Activated CD8-positive, alpha-beta T cell treated with anti-CD3 and anti-CD28 coated beads for 36 hours (primary cell): ENCODE measurements at regions of chr11 and their contacts with region 1.

Region 1: DNA sequence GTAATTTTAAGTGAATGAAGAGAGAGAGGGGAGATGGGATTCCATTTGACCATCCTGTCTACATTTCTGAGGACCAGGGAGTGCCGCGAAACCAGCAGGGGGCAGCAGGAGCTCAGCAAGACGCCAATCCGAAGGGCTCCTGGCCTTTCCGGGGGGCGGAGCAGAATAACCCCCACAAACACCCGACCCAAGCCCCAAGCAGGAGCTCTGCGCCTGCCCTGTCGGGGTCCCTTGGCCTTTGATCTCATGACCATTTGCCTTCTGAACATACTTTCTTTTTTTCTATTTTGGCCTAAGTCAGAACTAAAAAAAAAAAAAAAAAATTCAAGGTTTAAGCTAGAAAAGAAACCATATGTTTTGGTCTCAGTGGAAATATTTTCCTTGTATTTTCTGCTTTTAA is 21.9 kb upstream of the SCN2B start:
- DNase-seq: peak; percentile 93
- ATAC-seq: peak; percentile 14
- H3K4me3 Mint-ChIP-seq: no peak overlapping the region
- H3K27ac Mint-ChIP-seq: no peak overlapping the region
- H3K4me1 Mint-ChIP-seq: peaks cover 40% of the 10 kb centered on the region
- H3K27me3 Mint-ChIP-seq: no peaks in the 10 kb centered on the region
- CTCF ChIP-seq: peak; percentile 92

Region 2: GRCh38 chr11:118186346-118187107 is 11.8 kb before region 1 on chr11:
- CTCF ChIA-PET with region 1: interaction called, 12 read pairs
- POLR2A ChIA-PET with region 1: interaction called, 3 read pairs
- intact Hi-C with region 1: no loop called
- DNase-seq: no peak
- ATAC-seq: no peak
- H3K4me3 Mint-ChIP-seq: no peak overlapping the region
- H3K27ac Mint-ChIP-seq: no peak overlapping the region
- H3K4me1 Mint-ChIP-seq: peaks cover 2% of the 10 kb centered on the region
- H3K27me3 Mint-ChIP-seq: peaks cover 8% of the 10 kb centered on the region
- CTCF ChIP-seq: no peak

Region 3: DNA sequence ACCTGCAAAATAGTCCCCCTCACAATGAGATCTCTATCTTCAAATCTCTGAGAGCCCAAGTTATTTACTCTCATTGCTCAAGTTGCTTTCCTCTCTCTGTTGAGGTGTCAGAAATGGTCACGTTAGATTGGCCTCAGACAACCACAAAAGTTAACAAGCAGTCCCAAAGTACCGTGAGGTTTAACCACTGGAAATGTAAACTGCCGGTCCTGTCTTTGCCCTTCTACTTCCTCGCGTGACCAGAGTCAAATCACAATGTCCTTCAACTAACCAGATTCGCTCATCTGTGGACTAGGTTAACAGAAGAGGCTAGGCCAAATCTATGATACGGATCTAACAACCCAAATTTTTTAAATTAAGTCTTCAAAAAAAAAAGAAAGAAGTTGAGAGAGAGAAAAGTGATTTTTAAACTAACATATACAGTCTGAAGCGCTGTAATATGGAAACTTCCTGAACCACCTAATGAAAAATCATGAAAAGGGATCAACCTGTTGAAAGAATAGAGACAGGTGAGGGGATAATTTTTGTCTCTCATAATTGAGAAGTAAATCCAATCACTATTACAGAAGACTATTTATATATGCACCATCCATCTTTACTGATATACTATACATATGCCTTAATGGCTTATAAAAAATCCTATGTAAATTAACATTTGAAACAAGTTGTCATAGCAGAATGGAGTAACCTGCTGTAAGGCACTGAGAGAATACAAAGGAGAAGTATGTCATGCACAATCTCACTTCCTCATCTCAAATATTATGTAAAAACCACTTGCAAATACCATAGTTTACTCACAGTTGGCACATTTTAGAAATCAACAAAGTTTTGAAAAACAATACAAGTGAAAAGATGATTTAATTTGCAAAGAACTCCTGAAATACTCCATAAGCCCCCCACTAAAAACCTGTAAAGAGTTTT is 29.8 kb after region 1 on chr11:
- CTCF ChIA-PET with region 1: interaction called, 41 read pairs
- POLR2A ChIA-PET with region 1: interaction called, 326 read pairs
- intact Hi-C with region 1: loop called (anchors 2 kb)
- DNase-seq: peak; percentile 60
- ATAC-seq: peak; percentile 2
- H3K4me3 Mint-ChIP-seq: peak overlapping the region; percentile 52
- H3K27ac Mint-ChIP-seq: no peak overlapping the region
- H3K4me1 Mint-ChIP-seq: peaks cover 39% of the 10 kb centered on the region
- H3K27me3 Mint-ChIP-seq: no peaks in the 10 kb centered on the region
- CTCF ChIP-seq: no peak

Region 4: DNA sequence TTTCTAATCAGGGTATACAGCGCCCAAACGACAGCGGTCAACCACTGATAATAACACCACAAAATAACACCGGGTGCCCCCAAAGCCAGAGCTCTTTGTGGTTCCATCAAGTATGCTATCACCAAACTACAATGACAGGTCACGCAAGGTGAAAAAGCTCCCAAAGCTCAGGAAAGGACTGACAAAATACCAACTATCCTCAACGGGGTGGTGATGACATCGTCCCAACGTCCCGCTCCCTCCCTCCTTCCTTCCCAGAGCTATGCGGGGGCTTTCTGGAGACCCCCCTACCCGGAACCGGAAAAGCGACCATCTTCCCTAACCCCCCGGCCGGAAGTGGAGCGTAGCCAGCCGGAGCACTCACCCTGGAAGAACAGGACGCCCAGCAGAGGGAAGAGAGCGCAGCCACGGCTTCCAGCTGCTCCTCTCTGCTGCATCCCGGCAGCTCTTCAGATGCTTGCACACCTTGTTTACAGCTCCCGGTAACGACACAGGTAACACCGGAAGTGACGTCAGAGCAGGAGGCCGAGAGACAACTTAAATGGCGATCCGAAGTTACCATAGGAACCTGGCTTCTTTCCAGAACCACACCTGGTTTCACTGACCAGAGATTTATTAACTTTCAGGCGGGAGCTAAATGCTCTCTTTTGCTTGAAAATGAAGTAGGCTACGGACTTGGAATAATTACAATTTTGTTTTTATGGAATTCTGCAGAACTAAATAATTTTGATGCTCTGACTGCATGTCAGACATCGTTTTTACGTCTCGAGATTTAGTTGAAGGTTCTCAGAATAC is 53.7 kb after region 1 on chr11 and contains the start of gene MPZL3:
- CTCF ChIA-PET with region 1: interaction called, 24 read pairs
- POLR2A ChIA-PET with region 1: interaction called, 9 read pairs
- intact Hi-C with region 1: no loop called
- DNase-seq: peak; percentile 92
- ATAC-seq: peak; percentile 72
- H3K4me3 Mint-ChIP-seq: peak within 1 kb of the TSS; percentile 93
- H3K27ac Mint-ChIP-seq: peak within 1 kb of the TSS; percentile 99
- H3K4me1 Mint-ChIP-seq: peaks cover 49% of the 10 kb centered on the region
- H3K27me3 Mint-ChIP-seq: no peaks in the 10 kb centered on the region
- CTCF ChIP-seq: no peak
- total RNA-seq, gene MPZL3: 51.1 to 51.7 TPM

Region 5: DNA sequence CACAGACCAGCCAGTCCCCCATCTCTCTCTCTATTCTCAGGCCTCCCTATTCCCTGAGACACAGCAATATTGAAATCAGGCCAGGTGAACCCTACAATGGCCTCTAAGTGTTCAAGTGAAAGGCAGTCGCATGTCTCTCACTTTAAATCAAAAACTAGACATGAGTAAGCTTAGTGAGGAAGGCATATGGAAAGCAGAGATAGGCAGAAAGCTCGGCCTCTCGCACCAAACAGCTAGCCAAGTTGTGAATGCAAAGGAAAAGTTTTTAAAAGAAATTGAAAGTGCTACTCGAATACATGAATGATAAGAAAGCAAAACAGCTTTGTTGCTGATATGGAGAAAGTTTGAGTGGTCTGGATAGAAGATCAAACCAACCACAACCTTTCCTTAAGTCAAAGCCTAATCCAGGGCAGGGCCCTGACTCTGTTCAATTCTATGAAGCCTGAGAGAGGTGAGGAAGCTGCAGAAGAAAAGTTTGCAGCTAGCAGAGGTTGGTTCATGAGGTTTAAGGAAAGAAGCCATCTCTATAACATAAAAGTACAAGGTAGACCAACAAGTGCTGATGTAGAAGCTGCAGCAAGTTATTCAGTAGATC is 85.5 kb after region 1 on chr11:
- CTCF ChIA-PET with region 1: interaction called, 53 read pairs
- POLR2A ChIA-PET with region 1: interaction called, 7 read pairs
- intact Hi-C with region 1: no loop called
- DNase-seq: peak; percentile 48
- ATAC-seq: peak; percentile 66
- H3K4me3 Mint-ChIP-seq: peak overlapping the region; percentile 31
- H3K27ac Mint-ChIP-seq: peak overlapping the region; percentile 89
- H3K4me1 Mint-ChIP-seq: peaks cover 49% of the 10 kb centered on the region
- H3K27me3 Mint-ChIP-seq: no peaks in the 10 kb centered on the region
- CTCF ChIP-seq: no peak

Region 6: GRCh38 chr11:118304568-118305248 is 106.3 kb after region 1 on chr11 and contains the start of gene CD3E:
- CTCF ChIA-PET with region 1: interaction called, 18 read pairs
- POLR2A ChIA-PET with region 1: interaction called, 12 read pairs
- intact Hi-C with region 1: loop called (anchors 5 kb)
- DNase-seq: peak; percentile 88
- ATAC-seq: peak; percentile 77
- H3K4me3 Mint-ChIP-seq: peak within 1 kb of the TSS; percentile 96
- H3K27ac Mint-ChIP-seq: peak within 1 kb of the TSS; percentile 99
- H3K4me1 Mint-ChIP-seq: peaks cover 54% of the 10 kb centered on the region
- H3K27me3 Mint-ChIP-seq: no peaks in the 10 kb centered on the region
- CTCF ChIP-seq: no peak
- total RNA-seq, gene CD3E: 372 to 387 TPM

Region 7: DNA sequence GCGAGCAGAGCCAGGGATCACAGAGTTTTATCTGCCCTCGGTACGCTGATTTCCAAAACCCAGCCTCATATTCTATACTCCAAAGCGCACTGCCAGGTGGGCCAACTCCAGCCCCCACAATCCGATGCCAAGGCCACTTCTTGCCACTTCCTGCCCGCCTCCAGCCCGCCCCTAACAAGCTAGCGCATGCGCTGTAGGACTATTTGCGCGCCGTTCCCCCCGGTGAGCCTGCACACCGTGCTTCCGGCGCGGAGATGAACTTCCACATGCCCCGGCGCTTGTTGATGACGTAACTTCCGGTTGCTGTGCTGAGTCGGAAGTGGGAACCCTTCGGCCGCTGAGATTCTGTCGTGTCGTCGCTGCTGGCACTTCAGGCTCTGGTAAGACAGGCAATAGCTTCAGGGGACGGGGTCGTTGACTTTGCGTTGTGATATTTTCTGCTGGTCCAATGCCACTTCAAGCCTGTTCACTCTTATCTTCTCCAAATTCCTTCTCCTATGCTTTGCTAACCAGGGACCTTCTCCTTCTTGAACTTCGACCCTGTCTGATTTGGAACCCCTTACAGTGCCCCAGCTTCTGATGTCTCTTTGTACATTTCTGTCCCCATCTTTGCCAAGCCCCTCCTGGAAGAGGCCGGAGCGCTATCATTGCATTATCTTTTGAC is 161.1 kb after region 1 on chr11 and contains the start of gene UBE4A:
- CTCF ChIA-PET with region 1: interaction called, 24 read pairs
- POLR2A ChIA-PET with region 1: interaction called, 3 read pairs
- intact Hi-C with region 1: no loop called
- DNase-seq: peak; percentile 99
- ATAC-seq: peak; percentile 93
- H3K4me3 Mint-ChIP-seq: peak within 1 kb of the TSS; percentile 90
- H3K27ac Mint-ChIP-seq: peak within 1 kb of the TSS; percentile 91
- H3K4me1 Mint-ChIP-seq: peaks cover 45% of the 10 kb centered on the region
- H3K27me3 Mint-ChIP-seq: no peaks in the 10 kb centered on the region
- CTCF ChIP-seq: no peak
- total RNA-seq, gene UBE4A: 40.2 to 40.5 TPM